CD8-positive, alpha-beta T cell (primary cell): ENCODE measurements at regions of chr2 and their contacts with region 1.

Region 1: DNA sequence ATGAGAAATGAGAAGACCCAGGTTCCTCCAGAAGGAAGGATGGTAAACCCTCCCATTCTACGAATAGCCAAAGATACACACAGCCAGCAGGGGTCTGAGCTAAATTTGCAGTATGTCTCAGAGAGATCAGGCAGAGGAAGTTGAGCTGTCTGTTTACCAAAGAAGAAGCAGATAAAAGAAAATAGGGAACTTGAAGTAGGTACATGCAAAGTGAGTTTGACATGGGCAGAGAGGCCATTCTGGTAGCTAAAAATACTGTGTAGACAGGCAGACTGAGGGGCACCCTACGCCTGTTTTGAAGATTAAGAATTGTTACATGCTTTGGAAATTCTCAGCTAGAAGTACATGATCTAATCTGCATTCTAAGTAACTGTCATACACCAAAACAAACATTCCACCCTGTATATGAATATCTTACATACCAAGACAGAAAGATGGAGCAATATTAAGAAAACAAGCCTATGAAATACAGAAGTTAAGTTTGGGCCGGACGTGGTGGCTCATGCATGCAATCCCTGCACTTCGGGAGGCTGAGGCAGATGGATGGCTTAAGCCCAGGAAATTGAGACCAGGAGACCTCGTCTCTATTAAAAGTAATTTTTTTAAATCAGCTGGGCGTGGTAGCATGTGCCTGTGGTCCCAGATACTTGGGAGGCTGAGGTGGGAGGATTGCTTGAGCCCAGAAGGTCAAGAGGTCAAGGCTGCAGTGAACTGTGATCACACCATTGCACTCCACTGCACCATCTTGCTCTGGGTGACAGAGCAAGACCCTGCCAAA is 157.9 kb downstream of the ANKRD44 start:
- DNase-seq: peak in 5 of 9 experiments; percentile 34 to 71 (median 38)
- ATAC-seq: peak; percentile 89
- H3K4me3 ChIP-seq: peak overlapping the region in 1 of 2 experiments; percentile 16
- H3K4me3 Mint-ChIP-seq: peak overlapping the region; percentile 65
- H3K27ac ChIP-seq: peak overlapping the region; percentile 14 to 55
- H3K27ac Mint-ChIP-seq: peak overlapping the region; percentile 95
- H3K4me1 ChIP-seq: peaks cover 56% of the 10 kb centered on the region
- H3K4me1 Mint-ChIP-seq: peaks cover 79% of the 10 kb centered on the region
- H3K27me3 ChIP-seq: no peaks in the 10 kb centered on the region
- H3K27me3 Mint-ChIP-seq: no peaks in the 10 kb centered on the region
- CTCF ChIP-seq: peak; percentile 58

Region 2: DNA sequence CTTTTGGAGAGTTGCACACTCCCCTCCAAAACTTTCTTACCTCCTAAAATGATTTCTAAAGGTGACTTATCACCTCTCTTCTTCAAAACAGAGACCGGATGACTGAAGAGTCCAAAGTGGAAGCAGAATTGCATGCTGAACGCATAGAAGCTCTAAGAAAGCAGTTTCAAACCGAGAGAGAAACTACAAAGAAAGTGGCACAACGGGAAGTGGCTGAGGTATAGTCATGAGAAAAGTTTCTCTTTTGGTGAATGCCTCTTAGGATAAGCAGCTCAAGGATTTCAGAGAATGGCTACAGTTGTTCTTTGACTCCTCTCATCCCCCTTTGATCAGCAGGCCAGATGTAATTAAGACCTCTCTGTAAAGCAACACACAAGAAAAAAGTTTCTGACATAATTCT is 426.8 kb before region 1 on chr2:
- CTCF ChIA-PET with region 1: no interaction called
- POLR2A ChIA-PET with region 1: no interaction called
- intact Hi-C with region 1: no loop called
- DNase-seq: no peak
- ATAC-seq: no peak
- H3K4me3 ChIP-seq: no peak overlapping the region
- H3K4me3 Mint-ChIP-seq: no peak overlapping the region
- H3K27ac ChIP-seq: no peak overlapping the region
- H3K27ac Mint-ChIP-seq: no peak overlapping the region
- H3K4me1 ChIP-seq: no peaks in the 10 kb centered on the region
- H3K4me1 Mint-ChIP-seq: no peaks in the 10 kb centered on the region
- H3K27me3 ChIP-seq: no peaks in the 10 kb centered on the region
- H3K27me3 Mint-ChIP-seq: no peaks in the 10 kb centered on the region
- CTCF ChIP-seq: no peak

Region 3: GRCh38 chr2:197137231-197137630 is 15.4 kb before region 1 on chr2:
- CTCF ChIA-PET with region 1: interaction called, 12 read pairs
- POLR2A ChIA-PET with region 1: interaction called, 4 read pairs
- intact Hi-C with region 1: loop called in 1 of 2 experiments (anchors 1 kb)
- DNase-seq: no peak
- ATAC-seq: no peak
- H3K4me3 ChIP-seq: no peak overlapping the region
- H3K4me3 Mint-ChIP-seq: peak overlapping the region; percentile 13
- H3K27ac ChIP-seq: peak overlapping the region; percentile 13 to 14
- H3K27ac Mint-ChIP-seq: peak overlapping the region; percentile 80
- H3K4me1 ChIP-seq: peaks cover 89% of the 10 kb centered on the region
- H3K4me1 Mint-ChIP-seq: peaks cover 93% of the 10 kb centered on the region
- H3K27me3 ChIP-seq: no peaks in the 10 kb centered on the region
- H3K27me3 Mint-ChIP-seq: no peaks in the 10 kb centered on the region
- CTCF ChIP-seq: no peak

Region 4: GRCh38 chr2:197184959-197185586 is 32.4 kb after region 1 on chr2:
- CTCF ChIA-PET with region 1: interaction called, 4 read pairs
- POLR2A ChIA-PET with region 1: no interaction called
- intact Hi-C with region 1: loop called in 1 of 2 experiments (anchors 5 kb)
- DNase-seq: no peak
- ATAC-seq: no peak
- H3K4me3 ChIP-seq: no peak overlapping the region
- H3K4me3 Mint-ChIP-seq: no peak overlapping the region
- H3K27ac ChIP-seq: no peak overlapping the region
- H3K27ac Mint-ChIP-seq: peak overlapping the region; percentile 86
- H3K4me1 ChIP-seq: peaks cover 48% of the 10 kb centered on the region
- H3K4me1 Mint-ChIP-seq: peaks cover 92% of the 10 kb centered on the region
- H3K27me3 ChIP-seq: no peaks in the 10 kb centered on the region
- H3K27me3 Mint-ChIP-seq: no peaks in the 10 kb centered on the region
- CTCF ChIP-seq: no peak